ENCODE measurements at regions of chr3 and their contacts with region 1.

Region 1: DNA sequence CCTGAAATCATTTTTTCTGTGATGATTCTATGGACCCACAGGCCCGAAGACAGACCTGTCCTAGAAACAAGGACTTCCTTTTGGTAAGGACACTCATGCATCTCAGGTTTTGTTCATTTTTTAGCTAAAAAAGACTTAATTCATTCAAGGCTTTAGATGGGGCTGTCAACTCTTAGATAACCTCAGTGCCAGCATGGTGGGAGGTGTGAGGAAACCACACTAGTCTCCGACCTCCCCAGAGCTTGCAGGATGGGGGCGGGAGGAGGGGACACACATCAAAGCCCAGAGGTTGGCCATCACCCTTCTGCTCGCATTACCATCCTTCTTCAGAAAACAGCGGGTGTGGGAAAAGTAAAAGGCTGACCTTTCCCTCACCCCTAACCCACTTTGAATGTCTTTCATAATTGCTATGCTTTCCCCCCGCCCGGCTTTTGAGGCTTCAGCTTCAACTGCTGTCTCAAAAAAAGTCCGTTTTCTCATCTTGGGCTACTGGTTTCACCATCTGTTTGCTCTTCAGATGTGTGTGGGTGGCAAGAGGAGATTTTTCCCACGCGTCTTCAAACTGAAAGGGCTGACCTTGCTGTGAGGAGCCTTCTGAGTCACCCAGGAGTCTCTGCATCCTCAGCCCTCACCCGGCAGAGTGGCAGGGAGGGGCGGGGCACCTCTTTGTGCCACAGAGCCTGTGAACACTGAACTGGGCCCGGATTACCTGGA is 27.6 kb upstream of the CXCR6 start:
- DNase-seq: peak; percentile 52 to 88 (median 70)
- H3K4me3 ChIP-seq: peak overlapping the region in 1 of 2 donors; percentile 9
- H3K4me3 Mint-ChIP-seq: peak overlapping the region; percentile 81 to 94 (median 86)
- H3K27ac ChIP-seq: peak overlapping the region; percentile 38
- H3K27ac Mint-ChIP-seq: peak overlapping the region; percentile 77 to 94 (median 88)
- H3K4me1 ChIP-seq: peaks cover 44% of the 10 kb centered on the region
- H3K4me1 Mint-ChIP-seq: peaks cover 21 to 66% (median 38%) of the 10 kb centered on the region in 4 donors
- H3K27me3 ChIP-seq: no peaks in the 10 kb centered on the region
- H3K27me3 Mint-ChIP-seq: no peaks in the 10 kb centered on the region

Region 2: DNA sequence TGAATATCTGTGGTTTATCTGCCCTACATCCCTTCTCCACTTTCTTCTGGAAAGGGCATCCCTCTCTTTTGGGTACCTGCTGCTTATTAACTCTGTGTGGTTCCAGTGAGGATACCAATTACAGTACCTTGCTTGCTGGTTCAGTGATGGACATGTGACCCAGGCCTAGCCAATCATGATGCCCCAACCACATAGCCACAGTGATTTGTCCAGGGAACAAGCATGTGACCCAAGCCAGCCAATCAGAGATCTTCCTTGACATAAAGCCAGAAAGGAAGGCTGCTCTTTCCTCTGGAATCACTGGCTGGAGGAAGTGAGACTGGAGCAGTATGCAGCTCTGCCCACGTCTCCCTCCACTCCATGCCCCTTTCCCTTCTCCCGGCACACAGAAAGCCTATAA is 678.7 kb before region 1 on chr3:
- CTCF ChIA-PET with region 1: no interaction called
- POLR2A ChIA-PET with region 1: no interaction called
- intact Hi-C with region 1: no loop called
- DNase-seq: no peak
- H3K4me3 ChIP-seq: no peak overlapping the region
- H3K4me3 Mint-ChIP-seq: no peak overlapping the region
- H3K27ac ChIP-seq: no peak overlapping the region
- H3K27ac Mint-ChIP-seq: no peak overlapping the region
- H3K4me1 ChIP-seq: no peaks in the 10 kb centered on the region
- H3K4me1 Mint-ChIP-seq: peaks cover 0 to 5% (median under 1%) of the 10 kb centered on the region in 4 donors
- H3K27me3 ChIP-seq: no peaks in the 10 kb centered on the region
- H3K27me3 Mint-ChIP-seq: peaks cover 5 to 18% of the 10 kb centered on the region in 2 donors

Region 3: GRCh38 chr3:45593708-45594609 is 321.7 kb before region 1 on chr3:
- CTCF ChIA-PET with region 1: no interaction called
- POLR2A ChIA-PET with region 1: no interaction called
- intact Hi-C with region 1: loop called (anchors 10 kb)
- DNase-seq: peak; percentile 61 to 78 (median 67)
- H3K4me3 ChIP-seq: peak overlapping the region; percentile 70 to 76
- H3K4me3 Mint-ChIP-seq: peak overlapping the region; percentile 89 to 99 (median 94)
- H3K27ac ChIP-seq: peak overlapping the region; percentile 58
- H3K27ac Mint-ChIP-seq: peak overlapping the region; percentile 81 to 98 (median 90)
- H3K4me1 ChIP-seq: peaks cover 59% of the 10 kb centered on the region
- H3K4me1 Mint-ChIP-seq: peaks cover 42 to 60% (median 52%) of the 10 kb centered on the region in 4 donors
- H3K27me3 ChIP-seq: no peaks in the 10 kb centered on the region
- H3K27me3 Mint-ChIP-seq: no peaks in the 10 kb centered on the region

Region 4: DNA sequence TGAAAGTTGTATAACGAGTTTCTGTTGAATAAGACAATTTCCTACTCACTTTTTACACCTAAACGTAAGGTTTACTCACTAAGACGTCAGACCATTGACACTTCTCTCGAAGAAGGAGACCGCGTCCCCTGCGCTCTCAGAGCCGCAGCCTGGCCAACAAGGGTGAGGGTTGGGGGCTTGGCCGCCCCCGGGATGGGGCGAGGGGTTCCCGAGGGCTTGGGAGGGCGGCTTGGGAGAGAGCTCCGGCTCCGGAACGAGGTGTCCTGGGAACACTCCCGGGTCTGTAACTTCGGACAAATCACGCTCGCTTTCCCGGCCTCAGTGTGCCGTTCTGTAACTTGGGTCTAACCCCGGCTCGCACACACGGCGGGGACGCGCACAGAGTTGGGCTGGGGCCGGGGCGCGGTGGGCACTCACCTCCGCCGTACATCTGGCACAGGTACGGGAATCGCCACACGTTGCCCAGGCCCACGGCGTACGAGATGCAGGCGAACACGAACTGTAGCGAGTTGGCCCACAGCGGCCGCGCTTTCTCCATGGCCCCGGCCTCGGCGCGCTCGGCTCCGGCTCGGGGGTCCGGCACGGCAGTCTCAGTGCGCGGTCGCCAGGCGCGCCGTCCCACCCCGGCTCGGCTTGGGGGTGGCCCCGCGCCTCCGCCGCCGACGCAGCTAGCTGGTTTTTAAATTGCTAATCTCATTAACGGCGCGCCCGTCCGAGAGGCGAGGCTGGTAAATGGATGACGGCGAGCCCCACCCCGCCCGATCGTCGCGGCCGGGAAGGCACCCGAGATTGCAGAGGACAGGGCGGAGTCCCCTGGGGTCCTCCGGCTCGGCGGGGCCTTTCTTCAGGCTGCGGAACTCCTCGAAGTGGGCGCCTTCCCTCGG is 119.6 kb before region 1 on chr3 and contains the start of gene SLC6A20:
- CTCF ChIA-PET with region 1: no interaction called
- POLR2A ChIA-PET with region 1: no interaction called
- intact Hi-C with region 1: loop called (anchors 5 kb)
- DNase-seq: peak in 3 of 5 donors; percentile 4 to 17 (median 14)
- H3K4me3 ChIP-seq: peak within 1 kb of the TSS in 1 of 2 donors; percentile 44
- H3K4me3 Mint-ChIP-seq: peak within 1 kb of the TSS; percentile 61 to 84 (median 80)
- H3K27ac ChIP-seq: no peak within 1 kb of the TSS
- H3K27ac Mint-ChIP-seq: peak within 1 kb of the TSS in 1 of 7 donors; percentile 65
- H3K4me1 ChIP-seq: peaks cover 8% of the 10 kb centered on the region
- H3K4me1 Mint-ChIP-seq: peaks cover 4 to 8% (median 7%) of the 10 kb centered on the region in 4 donors
- H3K27me3 ChIP-seq: peaks cover 23% of the 10 kb centered on the region
- H3K27me3 Mint-ChIP-seq: peaks cover 37 to 39% of the 10 kb centered on the region in 2 donors
- total RNA-seq, gene SLC6A20: not detected

Measured in CD4-positive, alpha-beta memory T cell (primary cell).